GM10248 (cell line): ENCODE measurements at regions of chr7 and their contacts with region 1.

Region 1: DNA sequence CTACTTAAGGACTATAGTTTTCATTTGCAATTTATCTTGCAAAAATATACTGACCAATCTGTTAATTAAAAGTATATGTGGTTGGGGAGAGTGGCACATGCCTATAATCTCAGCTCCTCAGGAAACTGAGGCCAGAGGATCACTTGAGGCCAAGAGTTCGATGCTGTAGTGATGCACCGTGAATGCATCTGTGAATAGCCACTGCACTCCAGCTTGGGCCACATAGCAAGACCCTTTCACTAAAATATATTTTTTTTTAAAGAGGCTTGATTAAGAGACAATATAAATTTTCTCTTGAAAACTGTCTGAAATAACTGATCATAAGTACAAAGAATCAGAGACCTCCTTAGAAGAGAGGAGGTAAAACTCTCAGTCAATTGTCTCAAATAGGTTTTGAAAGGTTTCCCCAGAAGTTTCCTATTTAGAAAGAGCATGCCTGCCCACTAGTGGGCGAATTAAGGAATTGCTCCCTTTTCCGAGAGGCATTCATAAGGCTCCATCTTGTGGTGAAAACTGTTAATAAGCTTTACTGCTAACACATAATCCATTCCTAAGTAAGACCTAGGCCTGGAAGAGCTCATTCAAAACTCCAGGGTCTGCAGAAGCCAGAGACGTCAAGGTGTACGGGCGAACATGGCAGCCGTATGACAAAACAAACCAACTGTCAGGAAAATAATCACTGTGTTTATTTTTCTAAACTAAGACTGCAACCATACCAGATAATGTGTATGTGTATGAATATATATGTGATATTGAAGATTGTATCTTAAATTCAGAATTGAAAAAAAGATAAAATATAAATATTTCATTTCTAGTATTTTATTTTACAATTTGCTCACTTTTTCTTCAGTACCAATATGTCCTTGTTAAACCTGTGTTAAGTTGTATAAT is 6.8 kb upstream of the TAS2R40 start:
- DNase-seq: peak; percentile 74
- CTCF ChIP-seq: peak; percentile 100

Region 2: GRCh38 chr7:142375666-142376313 is 839.2 kb before region 1 on chr7:
- CTCF ChIA-PET with region 1: no interaction called
- POLR2A ChIA-PET with region 1: no interaction called
- DNase-seq: no peak
- CTCF ChIP-seq: no peak

Region 3: DNA sequence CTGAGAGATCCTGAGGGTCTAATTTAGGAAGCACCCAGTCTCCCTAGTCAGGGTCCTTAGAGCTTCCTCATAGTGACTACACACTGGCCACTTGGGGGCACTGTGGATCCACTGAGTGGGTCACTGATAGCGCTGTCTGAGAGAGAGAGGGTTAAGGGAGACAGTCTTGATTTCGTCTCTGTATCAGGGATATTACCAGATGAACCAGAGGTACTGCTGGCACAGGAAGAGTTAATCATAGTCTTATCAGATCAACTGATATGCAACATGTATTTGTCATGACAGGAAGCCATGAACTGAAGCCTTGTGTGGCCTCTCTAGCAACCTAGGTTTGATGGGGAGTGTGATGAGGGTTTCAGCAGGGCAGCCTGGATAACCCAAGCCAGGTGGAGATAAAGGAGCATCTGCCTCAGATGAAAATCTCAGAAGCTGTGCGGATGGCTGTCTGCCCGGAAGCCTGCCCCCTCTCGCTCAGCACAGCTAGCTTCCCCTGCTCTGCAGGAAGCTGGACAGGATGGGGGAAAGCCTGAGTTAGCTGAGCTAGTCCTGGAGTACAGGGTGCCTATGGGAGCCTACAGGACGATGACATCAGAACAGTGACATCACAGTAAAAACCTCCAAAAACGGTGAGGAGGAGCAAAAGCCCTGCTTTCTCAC is 679.8 kb before region 1 on chr7:
- CTCF ChIA-PET with region 1: interaction called, 13 read pairs
- POLR2A ChIA-PET with region 1: no interaction called
- DNase-seq: peak; percentile 62
- CTCF ChIP-seq: peak; percentile 85

Region 4: DNA sequence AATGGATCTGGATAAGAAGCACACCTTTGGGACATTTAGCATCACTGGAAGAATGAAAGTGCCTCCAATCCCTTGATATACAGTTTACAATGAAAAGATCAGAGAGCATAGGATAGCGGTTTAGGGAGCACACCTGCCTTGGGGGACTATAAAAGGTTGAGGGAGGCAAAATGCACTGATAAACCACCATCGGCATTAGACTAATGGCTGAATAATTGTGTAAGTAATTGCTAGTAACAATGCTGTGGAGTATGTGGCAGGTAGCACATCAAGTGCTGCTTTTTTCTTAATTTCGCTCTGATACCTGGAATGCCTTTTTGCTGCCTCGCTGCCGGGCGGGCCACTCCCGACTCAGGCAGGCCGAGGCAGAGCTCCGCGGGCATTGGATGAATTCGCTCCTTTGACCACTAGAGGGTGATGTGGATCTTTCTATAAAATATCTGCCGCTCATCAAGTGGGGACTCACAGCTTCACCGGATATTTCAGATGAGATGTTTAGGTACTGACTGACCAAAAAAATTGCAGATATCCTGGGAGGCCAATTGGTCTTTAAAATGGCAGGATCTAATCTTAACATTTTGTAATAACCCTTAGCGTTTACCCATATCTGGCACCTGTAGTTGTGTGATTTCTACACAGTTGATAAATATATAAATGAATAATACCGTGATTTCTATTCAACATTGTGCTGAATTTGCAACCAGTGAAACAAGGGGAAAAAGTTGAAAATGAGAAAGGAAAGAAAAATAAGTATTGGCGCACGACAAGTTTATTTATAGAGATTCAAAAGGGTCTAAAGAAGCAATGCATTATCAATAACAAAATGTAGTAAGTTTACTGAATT is 582.5 kb before region 1 on chr7:
- CTCF ChIA-PET with region 1: interaction called, 14 read pairs
- POLR2A ChIA-PET with region 1: no interaction called
- DNase-seq: peak; percentile 79
- CTCF ChIP-seq: peak; percentile 79

Region 5: DNA sequence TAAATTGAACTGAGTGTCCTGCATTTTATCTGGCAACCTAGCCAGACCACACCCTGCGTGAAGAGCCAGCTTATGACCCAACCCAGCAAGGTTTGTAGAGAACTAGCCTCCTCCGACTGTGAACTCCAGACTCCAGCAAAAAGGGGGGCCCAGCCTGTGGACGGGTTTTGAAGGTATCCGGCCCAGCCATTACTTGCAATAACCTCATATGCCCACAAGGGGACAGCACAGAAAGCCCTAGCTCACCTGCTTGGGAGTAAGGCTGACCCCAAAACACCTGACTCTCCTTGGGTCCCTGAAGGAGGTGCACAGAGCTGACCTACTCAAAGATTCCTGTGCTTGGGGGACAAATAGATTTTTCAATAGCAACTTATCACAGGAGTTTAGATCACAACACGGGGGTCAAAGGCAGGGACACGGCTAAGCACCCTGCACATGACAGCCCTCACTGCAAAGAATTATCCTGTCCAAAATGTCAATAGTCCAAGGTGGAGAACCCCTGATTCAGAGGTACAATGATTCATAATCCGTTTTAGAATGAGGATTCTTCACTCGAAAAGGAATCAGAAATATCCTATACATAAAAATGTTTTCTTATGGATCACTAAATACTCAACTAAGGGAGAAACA is 334.0 kb before region 1 on chr7:
- CTCF ChIA-PET with region 1: interaction called, 23 read pairs
- POLR2A ChIA-PET with region 1: no interaction called
- DNase-seq: peak; percentile 72
- CTCF ChIP-seq: peak; percentile 73

Region 6: GRCh38 chr7:142992464-142992863 is 222.6 kb before region 1 on chr7:
- CTCF ChIA-PET with region 1: interaction called, 495 read pairs
- POLR2A ChIA-PET with region 1: no interaction called
- DNase-seq: no peak
- CTCF ChIP-seq: no peak

Region 7: GRCh38 chr7:143025371-143025770 is 189.7 kb before region 1 on chr7:
- CTCF ChIA-PET with region 1: interaction called, 26 read pairs
- POLR2A ChIA-PET with region 1: no interaction called
- DNase-seq: no peak
- CTCF ChIP-seq: no peak

Region 8: DNA sequence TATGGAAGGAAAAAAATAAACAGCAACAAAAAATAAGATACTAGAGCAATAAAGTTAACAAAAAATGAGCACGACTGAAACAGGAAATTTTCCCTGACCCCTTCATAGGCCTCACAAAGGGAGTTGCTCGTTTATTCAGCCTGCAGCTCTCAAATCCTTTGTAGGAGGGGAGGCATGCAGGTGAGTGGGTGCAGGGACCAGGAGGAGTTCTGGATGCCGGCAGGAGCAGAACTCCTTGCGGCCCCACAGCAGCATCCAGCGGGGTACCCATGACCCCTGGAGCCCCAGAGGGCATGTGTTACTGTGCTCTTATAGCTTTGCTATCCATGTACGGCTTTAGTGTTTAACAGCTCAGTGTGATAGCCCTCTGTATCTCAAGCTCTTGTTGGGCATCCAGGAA is 26.0 kb before region 1 on chr7:
- CTCF ChIA-PET with region 1: interaction called, 16 read pairs
- POLR2A ChIA-PET with region 1: no interaction called
- DNase-seq: no peak
- CTCF ChIP-seq: no peak